Natural killer cell (primary cell): ENCODE measurements at regions of chr10 and their contacts with region 1.

Region 1: DNA sequence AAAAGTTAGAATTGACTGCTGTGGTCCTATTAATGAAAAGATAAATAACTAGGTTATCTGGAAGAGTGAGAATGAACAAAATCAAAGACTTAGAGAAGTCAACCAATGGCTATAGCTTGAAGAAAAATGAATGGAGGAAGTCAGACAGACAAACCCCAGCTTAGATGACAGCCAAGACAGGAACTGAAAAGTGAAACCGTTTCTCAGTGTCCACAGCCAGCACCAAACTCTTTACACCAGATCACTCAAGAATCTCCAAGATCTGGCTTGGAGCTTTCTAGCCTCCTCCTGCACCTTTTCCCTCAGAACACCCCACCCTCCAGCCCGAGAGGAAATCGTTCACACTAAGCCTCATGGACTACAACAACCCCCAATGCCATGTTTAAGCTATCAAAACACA is 167.0 kb downstream of the SFMBT2 start:
- DNase-seq: peak; percentile 25 to 30
- ATAC-seq: peak; percentile 58 to 81 (median 60)
- H3K4me3 ChIP-seq: no peak overlapping the region
- H3K4me3 Mint-ChIP-seq: peak overlapping the region; percentile 92
- H3K27ac ChIP-seq: peak overlapping the region; percentile 71
- H3K27ac Mint-ChIP-seq: peak overlapping the region; percentile 90 to 99
- H3K4me1 ChIP-seq: peaks cover 30% of the 10 kb centered on the region
- H3K4me1 Mint-ChIP-seq: peaks cover 62 to 66% of the 10 kb centered on the region in 2 donors
- H3K27me3 ChIP-seq: no peaks in the 10 kb centered on the region
- H3K27me3 Mint-ChIP-seq: no peaks in the 10 kb centered on the region
- CTCF ChIP-seq: no peak

Region 2: DNA sequence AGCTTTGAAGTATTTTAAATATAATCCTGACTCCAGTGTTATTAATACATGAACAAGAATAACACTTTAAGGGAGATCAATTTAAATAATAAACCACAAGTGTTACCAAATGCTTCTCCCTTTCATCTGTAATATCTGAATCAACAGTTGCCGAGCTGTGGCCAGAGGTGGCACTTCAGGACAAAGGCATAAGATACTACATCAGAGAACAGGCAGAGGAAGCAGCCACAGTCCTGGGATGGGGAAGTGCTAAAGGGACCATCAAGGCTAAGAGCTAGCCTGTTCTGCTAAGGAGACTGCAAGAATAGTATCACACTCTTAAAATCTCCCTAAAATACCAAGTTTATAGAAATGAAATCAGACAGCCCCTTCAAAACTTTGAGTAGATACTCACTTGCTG is 285.6 kb before region 1 on chr10:
- intact Hi-C with region 1: loop called (anchors 1 kb)
- DNase-seq: peak; percentile 19 to 41
- ATAC-seq: peak; percentile 68 to 78 (median 70)
- H3K4me3 ChIP-seq: no peak overlapping the region
- H3K4me3 Mint-ChIP-seq: peak overlapping the region; percentile 72
- H3K27ac ChIP-seq: peak overlapping the region; percentile 15
- H3K27ac Mint-ChIP-seq: peak overlapping the region; percentile 79 to 86
- H3K4me1 ChIP-seq: peaks cover 24% of the 10 kb centered on the region
- H3K4me1 Mint-ChIP-seq: peaks cover 49 to 51% of the 10 kb centered on the region in 2 donors
- H3K27me3 ChIP-seq: no peaks in the 10 kb centered on the region
- H3K27me3 Mint-ChIP-seq: peaks cover 0 to 4% of the 10 kb centered on the region in 2 donors
- CTCF ChIP-seq: no peak

Region 3: GRCh38 chr10:7045891-7046599 is 197.8 kb before region 1 on chr10:
- intact Hi-C with region 1: loop called (anchors 1 kb)
- DNase-seq: peak; percentile 29 to 68
- ATAC-seq: peak; percentile 70 to 87 (median 86)
- H3K4me3 ChIP-seq: no peak overlapping the region
- H3K4me3 Mint-ChIP-seq: peak overlapping the region; percentile 62
- H3K27ac ChIP-seq: peak overlapping the region; percentile 71
- H3K27ac Mint-ChIP-seq: peak overlapping the region; percentile 83 to 85
- H3K4me1 ChIP-seq: peaks cover 74% of the 10 kb centered on the region
- H3K4me1 Mint-ChIP-seq: peaks cover 75 to 76% of the 10 kb centered on the region in 2 donors
- H3K27me3 ChIP-seq: no peaks in the 10 kb centered on the region
- H3K27me3 Mint-ChIP-seq: no peaks in the 10 kb centered on the region
- CTCF ChIP-seq: no peak

Region 4: DNA sequence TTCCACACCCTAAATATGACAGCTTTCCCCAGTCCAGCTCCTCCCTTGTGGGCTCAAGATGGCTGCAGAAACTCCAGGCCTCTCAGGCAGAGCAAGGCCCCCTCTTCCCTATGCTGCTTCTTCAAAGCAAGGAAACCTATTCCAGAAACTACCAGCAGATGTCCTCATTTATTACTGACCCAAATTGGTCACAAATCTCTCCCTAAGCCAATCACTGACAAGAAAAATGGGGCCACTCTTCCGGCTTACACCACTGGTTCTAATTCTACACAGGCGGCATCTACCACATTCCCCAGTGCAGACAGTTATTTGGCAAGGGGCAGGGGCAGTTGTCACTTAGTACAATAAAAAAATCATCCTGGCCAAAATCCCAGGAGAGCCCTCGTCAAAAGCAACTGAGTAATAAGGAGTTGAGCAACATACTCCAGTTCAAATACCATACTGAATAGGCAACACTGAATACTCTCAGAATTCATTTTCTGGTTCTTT is 16.6 kb after region 1 on chr10:
- intact Hi-C with region 1: loop called (anchors 1 kb)
- DNase-seq: peak in 1 of 2 donors; percentile 72
- ATAC-seq: peak; percentile 54 to 73 (median 70)
- H3K4me3 ChIP-seq: no peak overlapping the region
- H3K4me3 Mint-ChIP-seq: peak overlapping the region; percentile 79
- H3K27ac ChIP-seq: no peak overlapping the region
- H3K27ac Mint-ChIP-seq: peak overlapping the region; percentile 86 to 91
- H3K4me1 ChIP-seq: peaks cover 44% of the 10 kb centered on the region
- H3K4me1 Mint-ChIP-seq: peaks cover 55 to 58% of the 10 kb centered on the region in 2 donors
- H3K27me3 ChIP-seq: no peaks in the 10 kb centered on the region
- H3K27me3 Mint-ChIP-seq: no peaks in the 10 kb centered on the region
- CTCF ChIP-seq: peak; percentile 54

Region 5: DNA sequence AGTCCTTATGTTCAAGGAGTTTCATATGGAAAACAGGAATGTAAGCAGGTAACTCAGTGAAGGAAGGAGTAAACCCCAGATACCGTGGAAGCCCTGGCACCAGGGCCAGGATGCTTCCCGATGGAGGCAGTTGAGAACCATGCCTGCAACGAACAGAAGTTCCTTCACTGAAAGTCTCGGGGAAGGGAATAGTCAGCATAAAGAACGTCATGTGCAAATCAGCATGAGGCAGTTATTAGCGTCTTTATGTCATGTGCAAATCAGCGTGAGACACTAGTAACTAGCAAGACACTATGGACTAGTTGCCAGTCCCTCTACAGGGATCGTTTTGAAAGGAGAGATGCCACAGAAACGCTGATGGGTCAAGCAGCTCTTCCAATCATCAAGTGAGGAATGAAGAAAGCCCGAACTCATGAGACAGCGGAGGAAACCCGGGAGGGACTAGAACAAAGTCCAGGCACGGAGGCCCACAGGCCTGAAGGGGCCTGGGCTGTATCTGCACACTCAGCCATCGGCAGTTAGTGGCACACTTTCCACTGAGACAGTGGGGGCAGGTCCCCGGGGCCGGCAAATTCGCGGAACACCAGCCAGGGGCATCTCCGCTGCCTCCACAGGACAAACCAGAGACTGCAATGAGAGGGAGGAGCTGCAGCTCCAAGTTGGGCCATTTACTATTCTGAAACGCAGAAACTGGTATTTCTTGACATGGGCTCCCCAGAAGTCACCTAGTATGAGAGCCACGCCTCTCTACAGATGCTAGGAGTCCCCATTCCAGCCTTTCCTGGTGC is 57.3 kb after region 1 on chr10:
- intact Hi-C with region 1: no loop called
- DNase-seq: no peak
- ATAC-seq: no peak
- H3K4me3 ChIP-seq: no peak overlapping the region
- H3K4me3 Mint-ChIP-seq: no peak overlapping the region
- H3K27ac ChIP-seq: no peak overlapping the region
- H3K27ac Mint-ChIP-seq: peak overlapping the region; percentile 73 to 76
- H3K4me1 ChIP-seq: peaks cover 24% of the 10 kb centered on the region
- H3K4me1 Mint-ChIP-seq: peaks cover 87 to 89% of the 10 kb centered on the region in 2 donors
- H3K27me3 ChIP-seq: no peaks in the 10 kb centered on the region
- H3K27me3 Mint-ChIP-seq: no peaks in the 10 kb centered on the region
- CTCF ChIP-seq: no peak

Region 6: GRCh38 chr10:7410862-7411670 is 167.2 kb after region 1 on chr10 and contains the start of gene SFMBT2:
- intact Hi-C with region 1: loop called (anchors 1 kb)
- DNase-seq: peak; percentile 64 to 85
- ATAC-seq: peak; percentile 57 to 66 (median 65)
- H3K4me3 ChIP-seq: peak within 1 kb of the TSS; percentile 87
- H3K4me3 Mint-ChIP-seq: peak within 1 kb of the TSS; percentile 98
- H3K27ac ChIP-seq: no peak within 1 kb of the TSS
- H3K27ac Mint-ChIP-seq: peak within 1 kb of the TSS; percentile 87 to 95
- H3K4me1 ChIP-seq: peaks cover 48% of the 10 kb centered on the region
- H3K4me1 Mint-ChIP-seq: peaks cover 41 to 57% of the 10 kb centered on the region in 2 donors
- H3K27me3 ChIP-seq: peaks cover 13% of the 10 kb centered on the region
- H3K27me3 Mint-ChIP-seq: peaks cover 0 to 14% of the 10 kb centered on the region in 2 donors
- CTCF ChIP-seq: no peak
- total RNA-seq, gene SFMBT2: 50.4 to 70.4 (median 52.2) TPM